K562 (cell line): ENCODE measurements at regions of chr20 and their contacts with region 1.

Region 1: DNA sequence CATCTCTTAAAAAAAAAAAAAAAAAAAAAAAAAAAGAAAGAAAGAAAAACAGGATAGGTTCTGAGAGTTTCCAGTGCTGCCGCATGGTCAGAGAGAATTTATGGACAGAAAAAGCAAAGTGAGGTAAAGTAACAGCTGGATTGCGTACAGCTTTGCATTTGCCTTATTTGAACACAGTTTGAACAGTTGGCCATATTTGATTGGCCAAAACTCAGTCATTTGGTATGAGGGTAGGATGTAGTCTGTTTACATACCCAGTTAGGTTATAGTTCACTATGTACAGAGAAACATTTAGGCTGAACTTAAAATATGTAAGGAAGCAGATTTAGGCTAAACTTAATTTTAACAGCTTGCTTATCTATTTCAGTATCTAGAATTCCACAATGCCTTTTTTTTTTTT is 17.5 kb upstream of the L3MBTL1 start:
- DNase-seq: no peak
- ATAC-seq: no peak
- H3K4me3 ChIP-seq: no peak overlapping the region
- H3K27ac ChIP-seq: no peak overlapping the region
- H3K4me1 ChIP-seq: no peaks in the 10 kb centered on the region
- H3K27me3 ChIP-seq: peaks cover 2 to 5% of the 10 kb centered on the region in 2 experiments; a peak in 4 of 5 replicates
- CTCF ChIP-seq: no peak
- EP300 ChIP-seq: no peak
- POLR2A ChIP-seq: no peak
- RAD21 ChIP-seq: no peak

Region 2: DNA sequence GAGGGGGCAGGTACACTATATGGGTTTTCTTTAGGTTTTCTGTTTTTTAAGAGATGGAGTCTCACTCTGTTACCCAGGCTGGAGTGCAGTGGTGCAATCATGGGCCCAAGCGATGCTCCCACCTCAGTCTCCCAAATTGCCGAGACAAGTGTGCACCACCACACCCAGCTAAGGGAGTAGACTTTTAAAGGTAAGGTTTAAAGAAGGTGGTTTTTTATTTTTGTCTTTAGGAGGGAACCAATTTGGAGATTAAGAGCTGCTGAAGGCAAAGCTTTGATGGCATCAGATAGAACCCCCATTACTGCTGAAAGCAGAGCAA is 24.5 kb before region 1 on chr20:
- CTCF ChIA-PET with region 1: no interaction called
- POLR2A ChIA-PET with region 1: interaction called, 22 read pairs
- in situ Hi-C with region 1: no loop called
- intact Hi-C with region 1: no loop called
- DNase-seq: no peak
- ATAC-seq: peak; percentile 40
- H3K4me3 ChIP-seq: no peak overlapping the region
- H3K27ac ChIP-seq: no peak overlapping the region
- H3K4me1 ChIP-seq: peaks cover 0 to 3% of the 10 kb centered on the region in 2 experiments; a peak in 1 of 5 replicates
- H3K27me3 ChIP-seq: no peaks in the 10 kb centered on the region
- CTCF ChIP-seq: no peak
- EP300 ChIP-seq: no peak
- POLR2A ChIP-seq: no peak; the same call in 1 of the 2 replicates
- RAD21 ChIP-seq: no peak